MCF 10A (cell line): ENCODE measurements at regions of chr3 and their contacts with region 1.

Region 1: GRCh38 chr3:190883973-190884832 is 21.7 kb upstream of the GMNC start:
- DNase-seq: peak; percentile 80
- H3K4me3 Mint-ChIP-seq: no peak overlapping the region
- H3K27ac Mint-ChIP-seq: no peak overlapping the region
- H3K4me1 Mint-ChIP-seq: peaks cover 18% of the 10 kb centered on the region
- H3K27me3 Mint-ChIP-seq: no peaks in the 10 kb centered on the region
- CTCF ChIP-seq: peak; percentile 82

Region 2: GRCh38 chr3:190862209-190863118 is 21.7 kb before region 1 on chr3 and contains the start of gene GMNC:
- CTCF ChIA-PET with region 1: interaction called, 17 read pairs
- POLR2A ChIA-PET with region 1: interaction called, 3 read pairs
- intact Hi-C with region 1: no loop called
- DNase-seq: peak; percentile 82
- H3K4me3 Mint-ChIP-seq: peak within 1 kb of the TSS; percentile 71
- H3K27ac Mint-ChIP-seq: peak within 1 kb of the TSS; percentile 43
- H3K4me1 Mint-ChIP-seq: peaks cover 12% of the 10 kb centered on the region
- H3K27me3 Mint-ChIP-seq: no peaks in the 10 kb centered on the region
- CTCF ChIP-seq: no peak
- total RNA-seq, gene GMNC: not detected in 2 replicates

Region 3: GRCh38 chr3:190983875-190984274 is 99.7 kb after region 1 on chr3:
- CTCF ChIA-PET with region 1: no interaction called
- POLR2A ChIA-PET with region 1: no interaction called
- intact Hi-C with region 1: no loop called
- DNase-seq: no peak
- H3K4me3 Mint-ChIP-seq: no peak overlapping the region
- H3K27ac Mint-ChIP-seq: no peak overlapping the region
- H3K4me1 Mint-ChIP-seq: no peaks in the 10 kb centered on the region
- H3K27me3 Mint-ChIP-seq: no peaks in the 10 kb centered on the region
- CTCF ChIP-seq: no peak

Region 4: GRCh38 chr3:191051037-191051436 is 166.8 kb after region 1 on chr3:
- CTCF ChIA-PET with region 1: interaction called, 112 read pairs
- POLR2A ChIA-PET with region 1: interaction called, 4 read pairs
- intact Hi-C with region 1: loop called (anchors 1 kb)
- DNase-seq: peak; percentile 41
- H3K4me3 Mint-ChIP-seq: no peak overlapping the region
- H3K27ac Mint-ChIP-seq: no peak overlapping the region
- H3K4me1 Mint-ChIP-seq: no peaks in the 10 kb centered on the region
- H3K27me3 Mint-ChIP-seq: no peaks in the 10 kb centered on the region
- CTCF ChIP-seq: peak; percentile 38

Region 5: DNA sequence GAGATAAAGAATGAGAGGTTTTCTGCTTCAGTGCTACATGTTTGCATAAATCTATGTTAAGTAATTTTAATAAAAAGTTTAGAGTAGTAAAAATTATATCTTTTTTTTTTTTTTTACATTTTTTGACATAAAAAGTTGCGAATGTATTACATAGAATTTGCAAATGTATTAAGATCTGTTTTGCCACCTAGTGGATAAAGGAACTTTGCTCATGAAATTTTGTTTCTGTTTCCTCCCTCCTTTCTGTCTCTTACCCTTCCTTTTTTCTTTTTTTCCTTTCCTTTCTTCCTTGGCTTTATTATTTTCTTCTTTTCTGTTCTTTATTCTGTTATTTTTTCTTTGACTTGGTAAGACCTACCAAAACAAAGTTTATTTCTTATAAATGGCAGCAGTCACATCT is 504.6 kb after region 1 on chr3:
- CTCF ChIA-PET with region 1: no interaction called
- POLR2A ChIA-PET with region 1: no interaction called
- intact Hi-C with region 1: loop called (anchors 10 kb)
- DNase-seq: no peak
- H3K4me3 Mint-ChIP-seq: no peak overlapping the region
- H3K27ac Mint-ChIP-seq: peak overlapping the region; percentile 85
- H3K4me1 Mint-ChIP-seq: no peaks in the 10 kb centered on the region
- H3K27me3 Mint-ChIP-seq: no peaks in the 10 kb centered on the region
- CTCF ChIP-seq: peak; percentile 36

Region 6: DNA sequence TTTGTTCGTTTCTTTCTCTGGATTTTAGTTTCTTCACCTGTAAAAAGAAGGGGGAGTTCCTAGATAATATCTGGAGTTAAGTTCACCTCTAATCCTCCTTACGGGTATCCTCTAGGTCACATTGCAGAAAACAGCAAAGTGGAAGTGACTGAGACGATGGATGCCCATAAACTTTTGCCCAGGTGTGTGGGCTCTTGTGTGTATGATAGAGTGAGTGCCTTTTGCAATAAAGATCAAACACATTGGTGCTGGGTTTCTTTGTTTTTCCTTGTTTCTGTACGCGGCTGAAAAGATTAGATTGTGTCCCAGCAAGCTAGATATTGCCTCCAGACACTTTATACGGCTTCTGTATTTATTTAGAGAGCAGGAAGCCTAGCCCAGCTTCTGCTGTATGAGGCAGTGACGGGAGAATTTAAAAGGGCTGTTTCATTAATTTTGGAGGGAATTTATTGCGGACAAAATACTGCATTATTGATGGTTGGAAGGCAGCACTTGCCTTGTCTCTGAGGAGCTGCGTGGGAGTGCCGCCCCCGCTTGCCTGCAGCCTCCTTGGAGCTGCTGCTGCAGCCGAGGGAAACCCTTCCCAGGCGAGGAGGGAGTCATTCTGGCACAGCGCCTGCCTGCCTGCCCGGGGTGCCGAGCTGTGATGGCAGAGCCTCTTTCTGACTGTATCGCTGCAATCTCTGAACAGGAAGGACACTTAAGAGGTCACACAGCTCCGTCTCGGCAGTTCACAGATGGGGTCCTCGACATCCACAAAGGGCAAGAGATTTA is 615.3 kb after region 1 on chr3:
- CTCF ChIA-PET with region 1: no interaction called
- POLR2A ChIA-PET with region 1: no interaction called
- intact Hi-C with region 1: no loop called
- DNase-seq: peak; percentile 77
- H3K4me3 Mint-ChIP-seq: peak overlapping the region; percentile 62
- H3K27ac Mint-ChIP-seq: peak overlapping the region; percentile 73
- H3K4me1 Mint-ChIP-seq: peaks cover 11% of the 10 kb centered on the region
- H3K27me3 Mint-ChIP-seq: no peaks in the 10 kb centered on the region
- CTCF ChIP-seq: no peak